ENCODE measurements at regions of chr6 and their contacts with region 1.

Region 1: DNA sequence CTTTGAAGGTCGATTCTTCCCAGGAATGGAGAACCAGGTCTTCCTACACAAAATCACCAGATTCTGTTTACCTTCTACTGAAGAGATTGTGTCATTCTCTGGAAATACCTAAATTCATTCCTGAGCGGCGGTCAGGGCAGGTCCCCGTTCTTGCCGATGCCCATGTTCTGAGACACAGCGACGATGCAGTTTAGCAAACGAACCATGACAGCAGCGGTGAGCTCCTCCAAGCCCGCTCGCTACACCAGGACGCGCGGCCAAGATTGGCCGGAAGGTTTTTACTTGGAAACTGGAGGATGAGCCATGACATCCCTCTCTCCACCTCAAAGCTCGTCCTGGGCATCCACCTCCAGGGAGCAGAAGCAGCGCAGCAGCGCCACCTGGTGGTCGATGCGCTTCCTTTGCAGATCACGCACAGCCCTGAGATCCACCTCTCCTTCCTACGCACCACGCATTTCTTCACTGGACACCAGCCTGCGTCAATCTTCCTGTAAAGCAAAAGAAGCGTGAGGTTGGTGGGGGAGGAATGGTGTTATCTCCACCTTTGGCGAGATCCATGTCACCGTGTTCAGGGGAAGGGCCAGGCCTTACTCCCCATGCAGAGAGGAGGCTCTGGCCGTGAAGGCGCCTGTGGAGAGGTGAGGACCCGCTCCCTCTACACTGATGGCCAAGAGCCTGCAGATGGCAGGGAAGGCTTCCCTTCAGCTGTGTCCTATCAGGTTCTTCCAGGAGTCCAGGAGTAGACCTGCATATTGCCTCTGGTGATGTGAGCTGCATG is 9.9 kb upstream of the HLA-B start:
- DNase-seq: peak; percentile 68
- ATAC-seq: peak; percentile 98
- H3K4me3 Mint-ChIP-seq: peak overlapping the region; percentile 84
- H3K27ac Mint-ChIP-seq: peak overlapping the region; percentile 43
- H3K4me1 Mint-ChIP-seq: peaks cover 8% of the 10 kb centered on the region
- H3K27me3 Mint-ChIP-seq: peaks cover 6% of the 10 kb centered on the region
- CTCF ChIP-seq: peak; percentile 61

Region 2: DNA sequence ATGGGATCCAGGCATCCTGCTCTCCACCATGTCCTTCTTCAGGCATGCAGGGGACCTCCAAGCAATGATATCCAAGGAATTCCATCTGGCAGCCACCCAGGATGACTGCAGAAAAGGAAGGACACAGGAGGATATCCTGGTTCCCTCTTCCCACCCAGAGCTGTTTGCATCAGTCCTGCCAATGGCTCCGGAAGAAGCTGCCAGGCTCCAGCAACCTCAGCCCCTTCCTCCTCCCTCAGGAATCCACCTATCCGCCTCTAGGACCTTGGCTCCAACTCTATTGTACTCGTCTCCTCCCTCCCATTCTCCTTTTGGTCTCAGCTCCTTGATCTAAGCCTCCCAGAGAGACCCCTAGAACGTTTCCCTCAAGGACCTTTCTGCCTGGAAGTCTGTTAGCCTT is 227.3 kb before region 1 on chr6:
- CTCF ChIA-PET with region 1: interaction called, 30 read pairs
- POLR2A ChIA-PET with region 1: no interaction called
- intact Hi-C with region 1: loop called (anchors 1 kb)
- DNase-seq: no peak
- ATAC-seq: no peak
- H3K4me3 Mint-ChIP-seq: no peak overlapping the region
- H3K27ac Mint-ChIP-seq: no peak overlapping the region
- H3K4me1 Mint-ChIP-seq: peaks cover 7% of the 10 kb centered on the region
- H3K27me3 Mint-ChIP-seq: no peaks in the 10 kb centered on the region
- CTCF ChIP-seq: no peak

Region 3: GRCh38 chr6:31377029-31377428 is 10.1 kb after region 1 on chr6:
- CTCF ChIA-PET with region 1: interaction called, 21 read pairs
- POLR2A ChIA-PET with region 1: interaction called, 11 read pairs
- intact Hi-C with region 1: no loop called
- DNase-seq: no peak
- ATAC-seq: no peak
- H3K4me3 Mint-ChIP-seq: no peak overlapping the region
- H3K27ac Mint-ChIP-seq: no peak overlapping the region
- H3K4me1 Mint-ChIP-seq: no peaks in the 10 kb centered on the region
- H3K27me3 Mint-ChIP-seq: peaks cover 12% of the 10 kb centered on the region
- CTCF ChIP-seq: no peak

Region 4: GRCh38 chr6:31453259-31453658 is 86.4 kb after region 1 on chr6:
- CTCF ChIA-PET with region 1: no interaction called
- POLR2A ChIA-PET with region 1: no interaction called
- intact Hi-C with region 1: no loop called
- DNase-seq: no peak
- ATAC-seq: no peak
- H3K4me3 Mint-ChIP-seq: no peak overlapping the region
- H3K27ac Mint-ChIP-seq: no peak overlapping the region
- H3K4me1 Mint-ChIP-seq: no peaks in the 10 kb centered on the region
- H3K27me3 Mint-ChIP-seq: peaks cover 7% of the 10 kb centered on the region
- CTCF ChIP-seq: no peak

Region 5: GRCh38 chr6:33091957-33092356 is 1725.1 kb after region 1 on chr6:
- CTCF ChIA-PET with region 1: no interaction called
- POLR2A ChIA-PET with region 1: no interaction called
- intact Hi-C with region 1: no loop called
- DNase-seq: no peak
- ATAC-seq: peak; percentile 75
- H3K4me3 Mint-ChIP-seq: no peak overlapping the region
- H3K27ac Mint-ChIP-seq: peak overlapping the region; percentile 79
- H3K4me1 Mint-ChIP-seq: peaks cover 47% of the 10 kb centered on the region
- H3K27me3 Mint-ChIP-seq: no peaks in the 10 kb centered on the region
- CTCF ChIP-seq: no peak